Activated T-helper 2 cell treated with anti-CD3 and anti-CD28 coated beads, Interferon-gamma antibody, Interleukin-2, Interleukin-4, amounts not matched to agents 10 μg/mL and 5 μg/mL and 100 μg/mL, durations not matched to agents 14 hours and 24 hours and 36 hours (primary cell): ENCODE measurements at regions of chr6 and their contacts with region 1.

Region 1: DNA sequence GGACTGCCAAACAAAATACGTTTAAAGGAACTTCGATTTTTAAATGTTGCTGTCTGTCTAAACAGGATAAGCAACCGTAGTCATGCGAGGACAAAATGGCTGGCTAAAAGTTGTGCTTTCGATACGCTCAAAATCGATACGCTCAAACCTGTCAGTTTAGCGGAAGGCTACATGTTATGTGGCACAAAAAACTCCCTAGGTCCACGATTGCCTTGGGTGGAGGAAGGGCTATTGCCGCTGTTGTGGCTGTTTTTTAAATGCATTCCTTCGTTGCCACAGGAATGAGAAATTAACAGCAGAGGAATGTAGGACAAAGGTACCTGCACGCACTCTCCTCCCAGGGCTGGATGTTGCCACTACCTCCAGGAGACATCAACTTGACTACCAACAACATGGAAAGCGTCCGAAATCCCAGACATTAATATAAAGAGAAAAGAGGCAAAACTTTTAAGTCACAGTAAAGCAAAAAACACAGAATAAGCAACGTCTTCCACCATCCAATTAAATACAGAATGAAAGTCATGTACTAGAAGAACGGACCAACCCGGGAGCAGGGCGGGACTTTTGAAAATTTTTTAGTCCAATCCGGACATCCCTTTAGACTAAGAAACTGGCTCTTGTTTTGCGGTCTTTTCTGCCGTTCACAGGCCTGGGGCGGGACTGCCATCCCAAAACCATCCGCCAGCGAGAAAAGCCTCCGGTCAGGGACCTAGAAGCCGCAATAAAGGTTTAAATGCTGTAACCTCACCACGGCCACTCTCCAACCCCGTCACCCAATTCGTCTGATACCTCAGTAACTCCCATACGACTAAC is 32.2 kb upstream of the HFE start:
- DNase-seq: peak; percentile 85
- H3K4me3 Mint-ChIP-seq: peak overlapping the region; percentile 90
- H3K27ac Mint-ChIP-seq: peak overlapping the region; percentile 99
- H3K4me1 Mint-ChIP-seq: peaks cover 33% of the 10 kb centered on the region
- H3K27me3 Mint-ChIP-seq: no peaks in the 10 kb centered on the region

Region 2: DNA sequence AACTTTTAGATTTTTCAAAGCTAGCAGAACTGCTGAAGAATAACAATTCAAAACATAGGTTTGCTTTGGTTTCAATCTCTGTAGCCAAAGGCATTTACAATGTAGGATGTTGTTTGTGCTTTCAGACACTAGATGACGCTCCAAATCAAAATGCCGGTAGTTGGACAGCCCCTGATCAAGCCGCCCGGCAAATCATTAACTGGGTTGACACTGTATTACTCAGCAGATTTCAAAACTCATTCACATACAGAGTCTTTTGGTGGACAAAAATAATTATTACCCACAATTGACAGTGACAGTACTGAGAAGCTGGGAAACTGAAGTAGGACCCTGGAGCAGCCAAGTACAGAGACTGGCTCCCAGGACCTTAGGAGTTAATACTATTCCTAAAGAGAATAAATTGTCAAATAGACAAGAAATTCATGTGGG is 10.9 kb after region 1 on chr6:
- intact Hi-C with region 1: loop called (anchors 1 kb)
- DNase-seq: peak; percentile 49
- H3K4me3 Mint-ChIP-seq: no peak overlapping the region
- H3K27ac Mint-ChIP-seq: no peak overlapping the region
- H3K4me1 Mint-ChIP-seq: peaks cover 7% of the 10 kb centered on the region
- H3K27me3 Mint-ChIP-seq: peaks cover 31% of the 10 kb centered on the region

Region 3: DNA sequence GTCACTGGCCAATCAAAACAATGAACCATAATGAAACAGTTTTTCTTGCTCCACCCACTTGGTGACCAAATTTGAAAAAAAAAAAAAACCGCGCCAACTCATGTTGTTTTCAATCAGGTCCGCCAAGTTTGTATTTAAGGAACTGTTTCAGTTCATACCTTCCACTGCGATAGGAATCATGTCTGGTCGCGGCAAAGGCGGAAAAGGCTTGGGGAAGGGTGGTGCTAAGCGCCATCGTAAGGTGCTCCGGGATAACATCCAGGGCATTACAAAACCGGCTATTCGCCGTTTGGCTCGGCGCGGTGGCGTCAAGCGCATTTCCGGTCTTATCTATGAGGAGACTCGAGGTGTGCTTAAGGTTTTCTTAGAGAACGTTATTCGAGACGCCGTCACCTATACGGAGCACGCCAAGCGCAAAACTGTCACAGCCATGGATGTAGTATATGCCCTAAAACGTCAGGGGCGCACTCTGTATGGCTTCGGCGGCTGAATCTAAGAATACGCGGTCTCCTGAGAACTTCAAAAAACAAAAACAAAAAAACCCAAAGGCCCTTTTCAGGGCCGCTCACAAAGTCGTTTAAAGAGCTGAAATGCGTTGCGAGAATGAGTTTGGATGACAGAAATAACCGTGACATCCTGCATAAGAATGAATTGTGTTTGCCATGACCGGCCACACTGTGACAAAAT is 48.9 kb after region 1 on chr6:
- intact Hi-C with region 1: loop called (anchors 2 kb)
- DNase-seq: peak; percentile 89
- H3K4me3 Mint-ChIP-seq: peak overlapping the region; percentile 76
- H3K27ac Mint-ChIP-seq: peak overlapping the region; percentile 95
- H3K4me1 Mint-ChIP-seq: peaks cover 19% of the 10 kb centered on the region
- H3K27me3 Mint-ChIP-seq: peaks cover 3% of the 10 kb centered on the region

Region 4: GRCh38 chr6:26342106-26343004 is 287.3 kb after region 1 on chr6:
- intact Hi-C with region 1: no loop called
- DNase-seq: no peak
- H3K4me3 Mint-ChIP-seq: peak overlapping the region; percentile 78
- H3K27ac Mint-ChIP-seq: peak overlapping the region; percentile 74
- H3K4me1 Mint-ChIP-seq: peaks cover 22% of the 10 kb centered on the region
- H3K27me3 Mint-ChIP-seq: peaks cover 8% of the 10 kb centered on the region

Region 5: DNA sequence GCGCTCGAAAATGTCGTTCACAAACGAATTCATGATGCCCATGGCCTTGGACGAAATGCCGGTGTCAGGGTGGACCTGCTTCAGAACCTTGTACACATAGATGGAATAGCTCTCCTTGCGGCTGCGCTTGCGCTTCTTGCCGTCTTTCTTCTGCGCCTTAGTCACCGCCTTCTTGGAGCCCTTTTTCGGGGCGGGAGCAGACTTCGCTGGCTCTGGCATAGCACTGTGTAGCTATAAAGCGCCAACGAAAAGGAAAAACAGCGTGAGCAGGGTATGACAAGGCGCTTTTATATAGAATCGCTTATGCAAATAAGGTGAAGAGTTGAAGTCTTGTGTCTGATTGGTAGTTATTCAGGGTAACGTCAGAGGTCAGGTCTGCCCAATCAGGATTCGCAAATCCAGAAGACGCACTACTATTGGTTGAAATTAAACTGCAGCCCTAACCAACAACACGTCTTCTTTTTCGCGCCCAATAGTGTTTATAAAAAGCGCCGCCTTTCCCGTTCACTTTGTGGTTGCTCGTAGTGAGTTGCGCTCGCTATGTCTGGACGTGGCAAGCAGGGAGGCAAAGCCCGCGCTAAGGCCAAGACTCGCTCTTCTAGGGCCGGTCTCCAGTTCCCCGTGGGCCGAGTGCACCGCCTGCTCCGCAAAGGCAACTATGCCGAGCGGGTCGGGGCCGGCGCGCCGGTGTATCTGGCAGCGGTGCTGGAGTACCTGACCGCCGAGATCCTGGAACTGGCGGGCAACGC is 1077.6 kb after region 1 on chr6:
- intact Hi-C with region 1: loop called (anchors 10 kb)
- DNase-seq: peak; percentile 95
- H3K4me3 Mint-ChIP-seq: no peak overlapping the region
- H3K27ac Mint-ChIP-seq: no peak overlapping the region
- H3K4me1 Mint-ChIP-seq: peaks cover 38% of the 10 kb centered on the region
- H3K27me3 Mint-ChIP-seq: no peaks in the 10 kb centered on the region